OCI-LY7 (cell line): ENCODE measurements at regions of chr4 and their contacts with region 1.

Region 1: GRCh38 chr4:32932156-32932555 is 2212.0 kb downstream of the PCDH7 start:
- DNase-seq: no peak
- H3K4me3 ChIP-seq: no peak overlapping the region
- H3K27ac ChIP-seq: no peak overlapping the region
- H3K4me1 ChIP-seq: no peaks in the 10 kb centered on the region
- CTCF ChIP-seq: no peak

Region 2: GRCh38 chr4:32962100-32962499 is 29.9 kb after region 1 on chr4:
- CTCF ChIA-PET with region 1: no interaction called
- POLR2A ChIA-PET with region 1: no interaction called
- intact Hi-C with region 1: loop called (anchors 1 kb)
- DNase-seq: no peak
- H3K4me3 ChIP-seq: no peak overlapping the region
- H3K27ac ChIP-seq: no peak overlapping the region
- H3K4me1 ChIP-seq: no peaks in the 10 kb centered on the region
- CTCF ChIP-seq: no peak

Region 3: GRCh38 chr4:33134366-33134765 is 202.2 kb after region 1 on chr4:
- CTCF ChIA-PET with region 1: no interaction called
- POLR2A ChIA-PET with region 1: no interaction called
- intact Hi-C with region 1: no loop called
- DNase-seq: no peak
- H3K4me3 ChIP-seq: no peak overlapping the region
- H3K27ac ChIP-seq: no peak overlapping the region
- H3K4me1 ChIP-seq: no peaks in the 10 kb centered on the region
- CTCF ChIP-seq: no peak